Activated CD8-positive, alpha-beta T cell treated with anti-CD3 and anti-CD28 coated beads, Interleukin-2, amount 10 ng/mL, durations not matched to agents 7 days and 5 days (primary cell): ENCODE measurements at regions of chr9 and their contacts with region 1.

Region 1: GRCh38 chr9:33623658-33624586 is 99.9 kb downstream of the ANKRD18B start:
- DNase-seq: peak; percentile 79
- ATAC-seq: peak; percentile 98
- H3K4me3 Mint-ChIP-seq: no peak overlapping the region
- H3K27ac Mint-ChIP-seq: no peak overlapping the region
- H3K4me1 Mint-ChIP-seq: peaks cover 3% of the 10 kb centered on the region
- H3K27me3 Mint-ChIP-seq: peaks cover 28% of the 10 kb centered on the region

Region 2: GRCh38 chr9:33649463-33649862 is 25.5 kb after region 1 on chr9:
- CTCF ChIA-PET with region 1: interaction called, 11 read pairs
- POLR2A ChIA-PET with region 1: no interaction called
- DNase-seq: peak; percentile 60
- ATAC-seq: peak; percentile 71
- H3K4me3 Mint-ChIP-seq: no peak overlapping the region
- H3K27ac Mint-ChIP-seq: no peak overlapping the region
- H3K4me1 Mint-ChIP-seq: peaks cover 18% of the 10 kb centered on the region
- H3K27me3 Mint-ChIP-seq: peaks cover 58% of the 10 kb centered on the region

Region 3: DNA sequence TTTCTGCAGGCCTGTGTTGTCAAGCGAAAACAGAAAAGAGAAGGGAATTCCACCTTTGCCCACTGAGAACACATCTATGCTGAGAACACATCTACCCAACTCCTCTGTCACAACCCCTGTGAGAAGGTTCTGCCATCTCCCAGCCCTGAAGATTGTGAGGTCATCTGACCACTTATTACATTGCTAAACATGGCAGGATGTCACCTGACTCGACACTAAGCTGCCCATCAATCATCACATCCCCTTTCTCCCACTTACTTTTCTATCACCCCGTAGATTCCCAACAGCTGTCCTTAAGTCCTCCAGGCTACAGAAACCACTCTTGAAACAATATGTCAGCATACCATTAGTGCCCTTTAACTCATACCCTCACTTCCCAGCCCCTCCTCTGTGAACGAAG is 107.2 kb after region 1 on chr9:
- CTCF ChIA-PET with region 1: interaction called, 226 read pairs
- POLR2A ChIA-PET with region 1: no interaction called
- DNase-seq: no peak
- ATAC-seq: no peak
- H3K4me3 Mint-ChIP-seq: no peak overlapping the region
- H3K27ac Mint-ChIP-seq: no peak overlapping the region
- H3K4me1 Mint-ChIP-seq: no peaks in the 10 kb centered on the region
- H3K27me3 Mint-ChIP-seq: peaks cover 32% of the 10 kb centered on the region